Right ventricle myocardium inferior (tissue), 1 donor: ENCODE measurements at regions of chr10 and their contacts with region 1.

Region 1: GRCh38 chr10:59625721-59626522 is 83.7 kb downstream of the SLC16A9 start:
- DNase-seq: no peak
- ATAC-seq: peak; percentile 70

Region 2: GRCh38 chr10:58781873-58782488 is 843.9 kb before region 1 on chr10:
- intact Hi-C with region 1: loop called (anchors 2 kb)
- DNase-seq: no peak
- ATAC-seq: no peak

Region 3: DNA sequence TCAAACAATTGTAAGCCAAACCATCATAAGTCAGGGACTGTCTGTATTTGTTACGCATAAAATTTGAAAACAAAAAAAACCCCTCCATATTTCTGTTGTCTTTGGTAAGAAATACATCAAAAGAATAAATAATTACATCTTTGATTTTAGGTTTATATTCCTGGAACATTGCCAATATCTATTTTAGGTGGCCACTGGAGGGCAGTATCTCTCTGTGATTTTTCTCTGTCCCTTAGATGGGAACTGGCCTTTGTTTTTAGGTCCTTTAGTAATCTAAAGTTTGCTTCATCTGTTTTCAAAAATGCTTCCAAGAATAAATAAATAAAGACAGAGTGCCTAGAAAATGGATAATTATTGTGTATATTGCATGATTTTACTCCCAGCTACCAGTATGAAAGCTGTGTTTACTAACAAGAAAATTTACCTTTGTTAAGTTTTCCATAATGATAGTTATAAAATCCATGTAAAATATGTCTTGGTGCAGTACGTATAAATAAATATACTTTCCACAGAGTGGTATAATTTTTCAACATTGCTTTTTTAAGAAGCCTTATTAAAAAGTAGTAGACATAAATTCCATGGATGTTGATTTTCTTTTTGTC is 385.2 kb before region 1 on chr10:
- intact Hi-C with region 1: loop called (anchors 5 kb)
- DNase-seq: no peak
- ATAC-seq: no peak

Region 4: GRCh38 chr10:59830601-59831259 is 204.8 kb after region 1 on chr10:
- intact Hi-C with region 1: loop called (anchors 1 kb)
- DNase-seq: no peak
- ATAC-seq: peak; percentile 41

Region 5: GRCh38 chr10:60032723-60033122 is 406.8 kb after region 1 on chr10:
- intact Hi-C with region 1: loop called (anchors 5 kb)
- DNase-seq: no peak
- ATAC-seq: peak; percentile 82